ENCODE measurements at regions of chr16 and their contacts with region 1.

Region 1: GRCh38 chr16:14529010-14529669 is 100.9 kb downstream of the PARN start:
- DNase-seq: peak; percentile 73 to 87 (median 84)
- H3K4me3 ChIP-seq: no peak overlapping the region
- H3K27ac ChIP-seq: no peak overlapping the region
- H3K4me1 ChIP-seq: peaks cover 3% of the 10 kb centered on the region
- H3K27me3 ChIP-seq: no peaks in the 10 kb centered on the region
- CTCF ChIP-seq: peak; percentile 58 to 91 (median 88)
- EP300 ChIP-seq: no peak
- POLR2A ChIP-seq: no peak

Region 2: GRCh38 chr16:14249291-14250032 is 279.7 kb before region 1 on chr16:
- intact Hi-C with region 1: loop called in 3 of 4 experiments (anchors 2 to 10 kb)
- DNase-seq: peak; percentile 25 to 65 (median 35)
- H3K4me3 ChIP-seq: no peak overlapping the region
- H3K27ac ChIP-seq: no peak overlapping the region
- H3K4me1 ChIP-seq: no peaks in the 10 kb centered on the region
- H3K27me3 ChIP-seq: no peaks in the 10 kb centered on the region
- CTCF ChIP-seq: peak; percentile 50 to 62 (median 56)
- EP300 ChIP-seq: no peak
- POLR2A ChIP-seq: no peak

Region 3: DNA sequence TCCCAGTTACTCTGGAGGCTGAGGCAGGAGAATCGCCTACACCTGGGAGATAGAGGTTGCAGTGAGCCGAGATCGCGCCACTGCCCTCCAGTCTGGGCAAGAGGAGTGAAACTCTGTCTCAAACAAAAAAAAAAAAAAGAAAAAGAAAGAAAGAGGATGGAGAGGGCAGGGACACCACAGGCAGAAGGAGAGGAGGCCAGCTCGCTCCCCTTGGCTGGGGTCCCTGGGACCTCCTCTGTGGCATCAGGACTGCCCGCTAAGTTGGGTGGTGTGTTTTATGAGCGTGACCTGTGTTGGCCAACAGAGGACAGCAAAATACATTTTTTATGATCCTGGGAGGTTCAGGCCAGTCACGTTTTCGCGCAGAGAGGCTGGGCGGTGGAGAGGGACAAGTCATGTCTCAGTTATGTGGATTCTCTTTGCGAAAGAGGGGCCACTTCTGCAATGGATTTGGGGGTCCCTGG is 228.4 kb before region 1 on chr16:
- intact Hi-C with region 1: loop called (anchors 1 to 2 kb)
- DNase-seq: peak; percentile 73 to 85 (median 77)
- H3K4me3 ChIP-seq: peak overlapping the region; percentile 75
- H3K27ac ChIP-seq: peak overlapping the region in 1 of 2 donors; percentile 1
- H3K4me1 ChIP-seq: peaks cover 3% of the 10 kb centered on the region
- H3K27me3 ChIP-seq: no peaks in the 10 kb centered on the region
- CTCF ChIP-seq: peak; percentile 31 to 69 (median 68)
- EP300 ChIP-seq: no peak
- POLR2A ChIP-seq: no peak

Region 4: DNA sequence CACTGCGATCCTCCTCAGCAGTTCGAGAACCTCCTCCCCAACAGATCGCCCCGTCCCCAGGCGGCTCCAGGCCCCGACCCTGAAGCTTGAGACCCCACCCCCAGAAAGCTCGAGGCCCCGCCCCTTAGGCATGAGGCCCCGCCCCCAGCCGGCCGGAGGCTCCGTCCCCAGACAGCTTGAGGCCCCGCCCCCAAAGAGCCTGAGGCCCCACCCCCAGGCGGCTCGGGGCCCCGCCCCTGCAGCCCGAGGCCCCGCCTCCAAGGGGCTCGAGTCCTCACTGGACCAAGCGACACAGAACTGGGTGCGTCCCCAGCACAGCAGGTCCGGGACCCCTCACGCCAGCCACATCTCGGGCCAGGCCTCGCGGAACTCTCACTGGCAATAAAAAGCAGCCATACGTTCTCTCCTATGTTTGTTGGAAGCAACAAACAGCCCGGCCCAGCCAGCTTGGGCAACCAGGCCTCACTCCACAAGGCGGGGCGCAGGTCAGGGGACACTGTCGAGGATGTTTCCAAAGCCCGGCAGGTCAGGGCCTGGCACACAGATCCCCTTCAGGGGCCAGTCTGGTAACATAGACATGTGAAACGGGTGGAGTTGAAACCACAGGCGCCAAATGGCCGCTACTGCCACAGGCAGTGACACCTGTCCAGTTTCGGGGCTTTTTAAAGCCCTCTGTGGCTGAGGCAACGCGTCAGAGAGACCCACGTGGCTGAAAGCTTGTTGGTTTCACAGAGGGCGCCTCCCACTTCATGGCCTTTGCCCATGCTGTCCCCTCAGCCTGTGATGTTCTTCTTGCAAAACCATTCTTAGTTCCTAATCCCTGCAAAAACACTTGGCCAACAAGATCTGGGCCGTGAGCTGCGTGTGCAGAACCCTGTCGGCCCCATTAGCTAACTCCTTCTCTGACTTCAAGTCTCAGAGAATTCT is 123.3 kb before region 1 on chr16:
- intact Hi-C with region 1: loop called in 1 of 4 experiments (anchors 10 kb)
- DNase-seq: peak in 4 of 5 donors; percentile 24 to 56 (median 37)
- H3K4me3 ChIP-seq: no peak overlapping the region
- H3K27ac ChIP-seq: no peak overlapping the region
- H3K4me1 ChIP-seq: peaks cover 3% of the 10 kb centered on the region
- H3K27me3 ChIP-seq: no peaks in the 10 kb centered on the region
- CTCF ChIP-seq: no peak
- EP300 ChIP-seq: no peak
- POLR2A ChIP-seq: no peak

Region 5: GRCh38 chr16:14475370-14476139 is 53.6 kb before region 1 on chr16:
- intact Hi-C with region 1: no loop called
- DNase-seq: no peak
- H3K4me3 ChIP-seq: no peak overlapping the region
- H3K27ac ChIP-seq: no peak overlapping the region
- H3K4me1 ChIP-seq: no peaks in the 10 kb centered on the region
- H3K27me3 ChIP-seq: no peaks in the 10 kb centered on the region
- CTCF ChIP-seq: no peak
- EP300 ChIP-seq: no peak
- POLR2A ChIP-seq: no peak